MCF 10A (cell line): ENCODE measurements at regions of chr1 and their contacts with region 1.

Region 1: DNA sequence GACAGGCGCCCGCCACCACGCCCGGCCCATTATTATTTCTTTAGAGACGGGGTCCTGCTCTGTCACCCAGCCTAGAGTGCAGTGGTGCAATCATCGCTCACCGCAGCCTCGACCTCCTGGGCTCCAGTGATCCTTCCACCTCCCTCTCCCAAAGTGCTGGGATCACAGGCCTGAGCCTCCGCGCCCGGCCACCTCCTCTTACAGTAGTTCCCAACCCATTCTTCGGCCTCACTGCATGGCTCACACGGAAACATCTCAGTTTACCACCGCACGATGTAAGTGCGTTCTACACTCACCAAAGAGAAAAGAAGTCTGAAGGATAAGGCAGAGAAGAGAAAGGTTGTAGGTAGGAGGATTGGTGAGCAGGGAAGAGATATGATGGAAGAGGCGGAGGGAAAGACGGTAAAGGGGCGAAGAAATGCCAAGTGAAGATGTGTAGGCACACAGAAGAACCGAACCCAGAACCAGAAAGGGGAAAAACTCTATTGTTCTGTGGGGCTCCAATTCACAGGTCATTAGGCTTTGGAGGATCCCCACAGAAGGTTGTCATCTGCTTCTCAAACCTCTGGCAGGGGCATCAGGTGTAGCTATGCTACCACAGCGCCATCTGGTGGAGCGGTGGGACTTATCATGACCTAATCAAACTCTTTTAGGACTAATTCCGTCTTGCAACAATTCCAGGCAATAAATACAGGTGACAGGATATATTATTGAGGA is 504.2 kb downstream of the SMYD3 start:
- DNase-seq: peak; percentile 96
- H3K4me3 Mint-ChIP-seq: no peak overlapping the region
- H3K27ac Mint-ChIP-seq: no peak overlapping the region
- H3K4me1 Mint-ChIP-seq: peaks cover 53% of the 10 kb centered on the region
- H3K27me3 Mint-ChIP-seq: no peaks in the 10 kb centered on the region
- CTCF ChIP-seq: peak; percentile 99

Region 2: GRCh38 chr1:245322673-245323441 is 680.0 kb before region 1 on chr1:
- CTCF ChIA-PET with region 1: interaction called, 29 read pairs
- POLR2A ChIA-PET with region 1: no interaction called
- intact Hi-C with region 1: loop called (anchors 1 kb)
- DNase-seq: peak; percentile 55
- H3K4me3 Mint-ChIP-seq: no peak overlapping the region
- H3K27ac Mint-ChIP-seq: no peak overlapping the region
- H3K4me1 Mint-ChIP-seq: no peaks in the 10 kb centered on the region
- H3K27me3 Mint-ChIP-seq: peaks cover 18% of the 10 kb centered on the region
- CTCF ChIP-seq: peak; percentile 46

Region 3: DNA sequence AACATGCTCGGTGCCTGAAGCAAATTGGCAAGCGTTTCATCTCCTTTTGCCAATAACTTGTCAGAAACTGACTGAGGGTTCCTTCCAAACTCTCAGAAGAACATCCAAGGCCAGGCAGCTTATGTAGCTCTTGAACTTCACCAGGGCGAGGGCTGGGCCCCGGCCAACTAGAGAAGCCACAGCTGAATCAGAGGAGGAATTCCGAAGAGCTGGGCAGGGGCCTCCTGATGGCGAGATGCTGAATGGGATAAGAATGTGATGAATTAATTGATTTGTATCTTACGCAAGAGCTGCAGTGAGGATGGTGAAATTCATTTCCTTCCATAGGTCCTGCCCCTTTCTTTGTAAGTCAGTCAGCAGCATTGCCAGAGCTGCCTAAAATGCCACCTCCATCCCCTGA is 502.3 kb before region 1 on chr1:
- CTCF ChIA-PET with region 1: interaction called, 4 read pairs
- POLR2A ChIA-PET with region 1: interaction called, 4 read pairs
- intact Hi-C with region 1: loop called (anchors 5 kb)
- DNase-seq: peak; percentile 99
- H3K4me3 Mint-ChIP-seq: no peak overlapping the region
- H3K27ac Mint-ChIP-seq: no peak overlapping the region
- H3K4me1 Mint-ChIP-seq: peaks cover 20% of the 10 kb centered on the region
- H3K27me3 Mint-ChIP-seq: peaks cover 24% of the 10 kb centered on the region
- CTCF ChIP-seq: peak; percentile 16

Region 4: DNA sequence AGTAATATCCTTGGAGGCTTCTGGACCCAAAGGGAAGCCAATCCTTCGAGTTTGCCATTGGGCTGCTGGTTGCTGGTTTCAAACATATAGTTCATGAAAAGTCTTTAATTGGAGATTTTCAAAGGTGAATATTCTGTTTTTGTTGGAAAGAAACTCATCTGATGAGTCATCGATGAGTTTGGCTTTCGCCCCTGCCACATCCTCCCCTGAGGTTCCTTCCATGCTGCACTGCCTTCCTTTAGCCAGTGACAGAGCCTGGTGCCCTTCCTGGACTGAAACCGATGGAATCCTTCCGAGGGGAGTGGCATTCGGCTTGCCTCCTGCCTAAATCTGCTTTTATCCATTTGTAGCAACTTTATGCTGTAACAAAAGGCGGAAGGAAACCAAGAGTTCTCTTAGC is 298.1 kb before region 1 on chr1:
- CTCF ChIA-PET with region 1: no interaction called
- POLR2A ChIA-PET with region 1: no interaction called
- intact Hi-C with region 1: loop called (anchors 5 kb)
- DNase-seq: peak; percentile 90
- H3K4me3 Mint-ChIP-seq: no peak overlapping the region
- H3K27ac Mint-ChIP-seq: no peak overlapping the region
- H3K4me1 Mint-ChIP-seq: peaks cover 12% of the 10 kb centered on the region
- H3K27me3 Mint-ChIP-seq: peaks cover 13% of the 10 kb centered on the region
- CTCF ChIP-seq: no peak

Region 5: DNA sequence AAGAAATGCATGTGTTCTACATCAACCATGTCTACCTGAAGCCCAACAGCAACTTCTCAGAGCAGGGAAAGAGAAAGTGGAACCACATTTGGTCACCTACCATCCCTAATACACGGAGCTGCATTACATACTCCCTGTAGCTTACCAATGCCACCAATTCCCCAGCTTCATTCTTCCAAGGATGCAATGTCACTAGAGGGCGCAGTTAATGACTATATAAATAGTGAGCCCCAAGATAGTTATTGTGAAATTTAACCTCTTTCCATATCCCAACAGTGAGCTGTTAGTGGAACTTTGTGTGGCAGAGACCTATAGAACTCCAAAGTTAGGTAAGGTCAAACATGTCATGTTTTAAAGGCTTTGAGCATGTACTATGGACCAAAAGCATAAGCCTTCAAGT is 114.1 kb before region 1 on chr1:
- CTCF ChIA-PET with region 1: interaction called, 4 read pairs
- POLR2A ChIA-PET with region 1: no interaction called
- intact Hi-C with region 1: loop called (anchors 1 kb)
- DNase-seq: peak; percentile 85
- H3K4me3 Mint-ChIP-seq: no peak overlapping the region
- H3K27ac Mint-ChIP-seq: no peak overlapping the region
- H3K4me1 Mint-ChIP-seq: no peaks in the 10 kb centered on the region
- H3K27me3 Mint-ChIP-seq: no peaks in the 10 kb centered on the region
- CTCF ChIP-seq: peak; percentile 49

Region 6: GRCh38 chr1:246117066-246117791 is 114.3 kb after region 1 on chr1:
- CTCF ChIA-PET with region 1: no interaction called
- POLR2A ChIA-PET with region 1: no interaction called
- intact Hi-C with region 1: no loop called
- DNase-seq: peak; percentile 61
- H3K4me3 Mint-ChIP-seq: no peak overlapping the region
- H3K27ac Mint-ChIP-seq: no peak overlapping the region
- H3K4me1 Mint-ChIP-seq: no peaks in the 10 kb centered on the region
- H3K27me3 Mint-ChIP-seq: no peaks in the 10 kb centered on the region
- CTCF ChIP-seq: peak; percentile 45

Region 7: GRCh38 chr1:246324765-246325110 is 321.9 kb after region 1 on chr1:
- CTCF ChIA-PET with region 1: no interaction called
- POLR2A ChIA-PET with region 1: no interaction called
- intact Hi-C with region 1: no loop called
- DNase-seq: peak; percentile 86
- H3K4me3 Mint-ChIP-seq: no peak overlapping the region
- H3K27ac Mint-ChIP-seq: no peak overlapping the region
- H3K4me1 Mint-ChIP-seq: peaks cover 6% of the 10 kb centered on the region
- H3K27me3 Mint-ChIP-seq: no peaks in the 10 kb centered on the region
- CTCF ChIP-seq: no peak